Stomach (tissue), 19 donors: ENCODE measurements at regions of chr11 and their contacts with region 1.

Region 1: DNA sequence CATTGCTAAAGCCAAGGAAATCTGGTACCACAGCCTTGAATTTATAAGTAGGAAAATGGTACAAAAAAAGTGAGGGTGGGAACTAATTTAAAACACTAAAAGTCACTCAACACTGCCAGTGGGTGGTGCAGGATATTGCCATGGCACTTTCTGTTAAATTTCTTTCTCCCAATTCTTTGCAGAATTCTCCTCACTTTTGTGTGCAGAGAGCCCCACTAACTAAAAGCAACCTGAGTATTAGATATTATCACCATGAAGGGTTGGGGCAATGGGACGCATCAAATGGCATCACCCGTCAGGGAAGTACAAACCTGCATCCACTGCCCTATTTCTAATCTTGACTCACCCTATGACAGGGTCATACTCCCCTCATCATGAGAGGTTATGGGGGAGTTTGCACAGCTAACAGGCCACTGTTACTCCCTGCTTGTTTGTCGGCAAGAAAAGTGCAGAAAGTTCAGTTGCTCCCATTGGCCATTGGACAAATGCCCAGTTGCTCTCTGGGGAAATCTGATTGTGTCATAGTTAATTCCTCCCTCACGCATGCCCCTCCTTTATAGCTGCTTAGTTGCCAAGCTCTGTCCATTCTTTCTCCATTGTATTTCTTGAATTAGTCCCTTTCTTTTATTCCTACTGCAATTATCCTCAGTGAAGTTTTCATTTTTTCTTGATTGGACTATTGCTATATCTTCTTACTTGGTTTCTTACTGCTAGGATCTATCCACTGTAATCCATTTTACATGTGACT is 93.8 kb upstream of the BLID start:
- DNase-seq: peak in 1 of 2 donors; percentile 83
- H3K4me3 ChIP-seq: no peak overlapping the region
- H3K27ac ChIP-seq: peak overlapping the region in 2 of 5 donors; percentile 57 to 73
- H3K4me1 ChIP-seq: peaks cover 0 to 36% (median 11%) of the 10 kb centered on the region in 4 donors
- H3K27me3 ChIP-seq: no peaks in the 10 kb centered on the region
- CTCF ChIP-seq: no peak
- EP300 ChIP-seq: no peak
- POLR2A ChIP-seq: no peak

Region 2: GRCh38 chr11:121964591-121964990 is 245.2 kb before region 1 on chr11:
- intact Hi-C with region 1: no loop called
- DNase-seq: no peak
- H3K4me3 ChIP-seq: no peak overlapping the region
- H3K27ac ChIP-seq: no peak overlapping the region
- H3K4me1 ChIP-seq: peaks cover 0 to 9% (median under 1%) of the 10 kb centered on the region in 4 donors
- H3K27me3 ChIP-seq: no peaks in the 10 kb centered on the region
- CTCF ChIP-seq: no peak
- EP300 ChIP-seq: no peak
- POLR2A ChIP-seq: no peak

Region 3: DNA sequence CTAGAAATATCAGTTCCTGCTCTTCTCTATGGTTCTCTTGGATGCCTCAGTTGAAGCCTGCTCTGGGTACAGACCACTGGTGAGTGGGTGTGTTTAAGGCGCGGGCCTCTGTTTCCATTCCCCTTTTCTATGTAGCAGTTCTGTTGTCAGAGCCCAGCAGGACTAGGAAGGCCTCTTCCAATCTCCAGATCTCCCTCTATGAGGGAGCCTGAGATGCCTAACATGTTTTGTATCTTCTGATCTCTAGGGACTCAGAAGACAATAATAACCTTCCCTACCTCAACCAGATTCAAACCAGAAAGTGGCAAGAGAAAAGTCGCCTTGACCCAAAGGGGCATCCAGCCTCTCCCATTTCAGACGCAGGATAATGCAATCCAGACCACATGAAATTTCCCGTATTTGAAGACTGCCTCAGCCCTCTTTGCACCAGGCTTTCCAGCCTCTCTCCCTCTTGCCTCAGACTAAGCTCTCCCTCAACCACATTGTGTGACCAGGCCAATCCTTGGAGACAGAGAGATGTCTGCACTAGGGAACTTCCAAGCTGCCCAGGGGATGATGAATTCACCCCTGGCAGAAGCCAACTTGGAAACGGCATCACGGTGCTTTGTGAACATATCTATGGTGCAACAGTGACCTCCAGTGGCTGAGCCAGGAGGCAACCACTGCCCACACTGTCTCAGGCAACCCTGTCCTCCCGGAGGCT is 295.7 kb after region 1 on chr11:
- intact Hi-C with region 1: loop called (anchors 5 kb)
- DNase-seq: peak; percentile 68 to 93
- H3K4me3 ChIP-seq: no peak overlapping the region
- H3K27ac ChIP-seq: no peak overlapping the region
- H3K4me1 ChIP-seq: peaks cover 0 to 4% (median 0%) of the 10 kb centered on the region in 4 donors
- H3K27me3 ChIP-seq: peaks cover 0 to 6% (median 0%) of the 10 kb centered on the region in 3 donors
- CTCF ChIP-seq: peak in 5 of 7 experiments; percentile 52 to 71 (median 69)
- EP300 ChIP-seq: no peak
- POLR2A ChIP-seq: no peak